BJ (cell line): ENCODE measurements at regions of chr11 and their contacts with region 1.

Region 1: GRCh38 chr11:10893714-10894151 is 35.9 kb upstream of the ZBED5 start:
- DNase-seq: no peak
- H3K4me3 ChIP-seq: no peak overlapping the region
- H3K27me3 ChIP-seq: no peaks in the 10 kb centered on the region
- CTCF ChIP-seq: peak; percentile 50

Region 2: GRCh38 chr11:10651656-10652381 is 241.9 kb before region 1 on chr11:
- CTCF ChIA-PET with region 1: no interaction called
- POLR2A ChIA-PET with region 1: no interaction called
- DNase-seq: no peak
- H3K4me3 ChIP-seq: no peak overlapping the region
- H3K27me3 ChIP-seq: no peaks in the 10 kb centered on the region
- CTCF ChIP-seq: no peak

Region 3: GRCh38 chr11:10878408-10879214 is 15.1 kb before region 1 on chr11:
- CTCF ChIA-PET with region 1: interaction called, 32 read pairs
- POLR2A ChIA-PET with region 1: no interaction called
- DNase-seq: no peak
- H3K4me3 ChIP-seq: no peak overlapping the region
- H3K27me3 ChIP-seq: no peaks in the 10 kb centered on the region
- CTCF ChIP-seq: peak; percentile 77